ENCODE measurements at regions of chr13 and their contacts with region 1.

Region 1: DNA sequence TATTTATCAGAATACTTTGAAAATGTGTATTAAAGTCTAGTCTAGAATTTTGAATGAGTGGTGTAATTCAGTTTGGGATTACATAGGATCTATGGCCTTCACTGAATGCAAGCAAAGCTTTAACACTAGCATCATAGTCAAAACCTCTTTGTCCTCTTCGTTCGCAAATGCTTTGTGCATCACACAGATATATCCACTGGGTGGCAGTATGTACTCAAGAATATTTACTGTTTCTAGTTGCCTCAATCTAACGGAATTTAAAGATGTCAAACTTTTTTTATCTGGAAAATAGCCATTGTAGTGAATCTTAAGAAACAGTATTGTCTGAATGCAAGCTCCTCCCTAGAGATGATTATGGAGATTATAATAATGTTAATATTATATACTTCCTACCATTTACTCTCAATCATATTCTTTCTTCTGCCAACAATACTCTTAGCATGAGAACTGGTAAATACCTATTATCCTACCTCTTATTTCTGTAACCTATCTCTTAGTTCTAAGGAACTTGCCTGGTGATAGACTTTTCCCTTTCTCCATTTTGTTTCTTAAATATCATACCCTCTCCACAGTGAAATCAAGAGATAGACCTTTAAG is 25.8 kb downstream of the LACC1 start:
- ATAC-seq: peak; percentile 61 to 77 (median 67)
- H3K4me3 ChIP-seq: no peak overlapping the region
- H3K27ac ChIP-seq: no peak overlapping the region
- H3K4me1 ChIP-seq: peaks cover 0 to 6% of the 10 kb centered on the region in 2 donors

Region 2: GRCh38 chr13:44050450-44051063 is 145.0 kb after region 1 on chr13:
- in situ Hi-C with region 1: loop called in 2 of 9 experiments (anchors 25 kb)
- ATAC-seq: no peak
- H3K4me3 ChIP-seq: no peak overlapping the region
- H3K27ac ChIP-seq: no peak overlapping the region
- H3K4me1 ChIP-seq: peaks cover 30 to 40% of the 10 kb centered on the region in 2 donors

Region 3: DNA sequence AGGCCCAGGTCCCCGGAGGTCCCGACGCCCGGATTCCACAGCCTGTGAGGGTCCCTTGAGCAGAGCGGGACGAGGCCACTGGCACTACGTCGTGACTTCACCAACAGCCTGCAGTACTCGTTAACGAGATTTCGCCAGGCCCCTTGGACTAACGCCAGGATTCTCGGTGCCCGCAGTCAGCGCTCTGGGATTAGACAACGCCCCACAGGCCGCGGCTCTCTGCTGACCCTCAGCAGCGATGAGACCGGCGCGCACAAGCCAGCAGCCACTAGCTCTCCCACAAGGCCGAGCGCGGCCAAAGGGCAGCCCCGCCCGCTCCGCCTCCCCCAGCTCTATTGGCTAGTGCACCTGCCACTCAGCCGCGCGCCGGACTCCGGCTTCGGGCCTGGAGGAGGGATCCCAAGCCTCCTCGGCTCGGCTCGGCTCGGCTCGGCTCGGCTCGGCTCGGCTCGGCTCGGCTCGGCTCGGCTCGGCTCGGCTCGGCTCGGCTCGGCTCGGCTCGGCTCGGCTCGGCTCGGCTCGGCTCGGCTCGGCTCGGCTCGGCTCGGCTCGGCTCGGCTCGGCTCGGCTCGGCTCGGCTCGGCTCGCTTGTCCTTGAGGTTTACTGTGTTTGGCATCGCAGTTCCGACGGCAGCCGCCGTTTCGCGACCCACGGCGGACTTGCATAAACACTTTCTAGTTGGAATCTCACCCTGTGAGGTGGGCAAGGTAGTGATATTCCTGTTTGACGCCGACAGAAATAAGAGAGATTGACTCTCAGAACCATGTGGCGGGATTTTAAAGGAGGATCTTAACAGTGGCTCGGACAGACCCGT is 236.4 kb after region 1 on chr13:
- in situ Hi-C with region 1: loop called in 1 of 9 experiments (anchors 25 kb)
- ATAC-seq: peak; percentile 95 to 99 (median 98)
- H3K4me3 ChIP-seq: peak overlapping the region; percentile 34 to 48 (median 40)
- H3K27ac ChIP-seq: peak overlapping the region; percentile 89 to 93
- H3K4me1 ChIP-seq: peaks cover 13 to 18% of the 10 kb centered on the region in 2 donors

Region 4: GRCh38 chr13:44191504-44192171 is 286.1 kb after region 1 on chr13:
- in situ Hi-C with region 1: loop called in 1 of 9 experiments (anchors 25 kb)
- ATAC-seq: peak; percentile 75 to 99 (median 83)
- H3K4me3 ChIP-seq: no peak overlapping the region
- H3K27ac ChIP-seq: no peak overlapping the region
- H3K4me1 ChIP-seq: peaks cover 3 to 13% of the 10 kb centered on the region in 2 donors

Region 5: GRCh38 chr13:44435142-44435982 is 529.8 kb after region 1 on chr13:
- in situ Hi-C with region 1: loop called (anchors 10 to 25 kb)
- ATAC-seq: peak; percentile 55 to 75 (median 70)
- H3K4me3 ChIP-seq: peak overlapping the region; percentile 74 to 92 (median 87)
- H3K27ac ChIP-seq: peak overlapping the region; percentile 96 to 98
- H3K4me1 ChIP-seq: peaks cover 14 to 19% of the 10 kb centered on the region in 2 donors

Region 6: GRCh38 chr13:44969551-44970484 is 1064.3 kb after region 1 on chr13:
- in situ Hi-C with region 1: loop called in 5 of 9 experiments (anchors 10 to 25 kb)
- ATAC-seq: peak; percentile 57 to 89 (median 81)
- H3K4me3 ChIP-seq: no peak overlapping the region
- H3K27ac ChIP-seq: no peak overlapping the region
- H3K4me1 ChIP-seq: peaks cover 4 to 19% of the 10 kb centered on the region in 2 donors

Region 7: DNA sequence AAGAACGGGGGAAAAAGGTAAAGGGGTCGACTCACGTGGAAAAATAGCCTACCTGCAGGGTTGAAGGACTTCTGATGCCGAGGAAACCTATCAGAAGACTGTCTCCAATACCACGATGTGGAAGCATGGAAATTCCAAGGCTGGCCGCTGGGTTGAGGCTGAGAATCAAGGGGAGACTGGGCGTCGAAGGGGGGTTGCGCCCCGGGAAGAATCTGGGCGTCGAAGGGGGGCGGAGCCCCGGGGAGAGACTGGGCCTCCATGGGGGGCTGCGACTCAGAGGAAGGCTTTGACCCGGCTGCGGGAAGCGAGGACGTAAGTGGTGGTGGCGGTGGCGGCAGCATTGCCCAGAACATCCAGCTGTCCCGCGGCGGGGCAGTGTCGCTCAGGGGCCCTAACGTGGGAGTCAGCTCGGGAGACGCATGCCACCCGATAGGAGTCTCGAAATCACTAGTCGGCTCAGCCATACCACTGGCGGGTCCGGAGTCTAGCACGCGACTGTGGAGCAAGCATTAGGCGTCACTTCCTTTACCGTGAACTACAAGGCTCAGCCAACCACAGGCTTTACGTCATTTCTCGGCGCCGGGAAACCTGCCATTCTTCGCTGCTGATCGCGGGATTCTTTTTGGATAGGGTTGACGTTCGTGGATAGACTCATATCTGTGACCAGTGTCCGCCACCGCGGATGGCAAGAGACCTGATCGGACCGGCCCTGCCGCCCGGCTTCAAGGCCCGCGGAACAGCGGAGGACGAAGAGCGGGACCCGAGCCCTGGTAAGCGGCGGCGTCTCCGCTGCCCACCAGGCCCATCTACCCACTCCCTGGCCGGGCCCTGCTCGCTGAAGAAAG is 1083.7 kb after region 1 on chr13 and contains the starts of genes GPALPP1 and NUFIP1:
- in situ Hi-C with region 1: loop called in 1 of 9 experiments (anchors 25 kb)
- ATAC-seq: peak; percentile 95 to 99 (median 99)
- H3K4me3 ChIP-seq: peak within 1 kb of the TSS; percentile 80 to 99 (median 85)
- H3K27ac ChIP-seq: peak within 1 kb of the TSS; percentile 77 to 92
- H3K4me1 ChIP-seq: peaks cover 14 to 16% of the 10 kb centered on the region in 2 donors
- total RNA-seq, gene GPALPP1: 20.3 to 52.8 (median 31.4) TPM
- total RNA-seq, gene NUFIP1: 4.3 to 9.4 (median 7.4) TPM

Measured in motor neuron (in vitro differentiated cells).